Transverse colon (tissue), 4 donors: ENCODE measurements at regions of chr2 and their contacts with region 1.

Region 1: GRCh38 chr2:120735746-120736170 is at the start of gene GLI2:
- DNase-seq: peak; percentile 65
- H3K4me3 ChIP-seq: peak within 1 kb of the TSS; percentile 39 to 56 (median 45)
- H3K27ac ChIP-seq: peak within 1 kb of the TSS; percentile 85 to 90 (median 86)
- H3K4me1 ChIP-seq: peaks cover 2 to 51% (median 31%) of the 10 kb centered on the region in 4 donors
- H3K27me3 ChIP-seq: peaks cover 72% of the 10 kb centered on the region
- CTCF ChIP-seq: peak; percentile 24 to 66 (median 58)
- EP300 ChIP-seq: no peak
- POLR2A ChIP-seq: no peak
- total RNA-seq, gene GLI2: 1.1 to 15.1 (median 4.2) TPM

Region 2: GRCh38 chr2:118763797-118764196 is 1972.0 kb before region 1 on chr2:
- in situ Hi-C with region 1: no loop called
- intact Hi-C with region 1: no loop called
- DNase-seq: no peak
- H3K4me3 ChIP-seq: no peak overlapping the region
- H3K27ac ChIP-seq: no peak overlapping the region
- H3K4me1 ChIP-seq: no peaks in the 10 kb centered on the region
- H3K27me3 ChIP-seq: peaks cover 26% of the 10 kb centered on the region
- CTCF ChIP-seq: no peak
- EP300 ChIP-seq: no peak
- POLR2A ChIP-seq: no peak

Region 3: DNA sequence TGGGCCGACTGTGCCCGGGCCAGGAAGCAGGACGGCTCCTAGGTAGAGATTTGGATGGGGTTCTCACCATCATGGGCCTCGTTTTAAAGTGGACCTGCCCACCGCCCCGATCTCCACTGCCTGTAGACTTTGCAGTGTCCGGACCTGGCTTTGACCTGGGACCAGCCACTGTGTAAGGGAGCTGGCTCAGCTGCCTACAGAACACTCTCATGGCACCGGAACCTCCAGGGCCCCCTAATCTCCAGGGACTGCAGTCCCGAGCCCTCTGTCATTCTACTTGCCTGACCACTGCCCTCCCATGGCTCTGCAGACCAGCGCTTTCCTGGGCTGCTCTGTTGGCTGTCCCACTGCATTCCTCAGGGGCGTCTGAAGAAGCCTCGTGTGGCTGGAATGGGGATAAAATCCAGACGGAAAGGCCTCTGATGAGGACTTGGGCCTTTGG is 120.7 kb after region 1 on chr2:
- in situ Hi-C with region 1: no loop called
- intact Hi-C with region 1: loop called (anchors 10 kb)
- DNase-seq: no peak
- H3K4me3 ChIP-seq: no peak overlapping the region
- H3K27ac ChIP-seq: no peak overlapping the region
- H3K4me1 ChIP-seq: no peaks in the 10 kb centered on the region
- H3K27me3 ChIP-seq: no peaks in the 10 kb centered on the region
- CTCF ChIP-seq: peak; percentile 7 to 29 (median 18)
- EP300 ChIP-seq: no peak
- POLR2A ChIP-seq: no peak

Region 4: DNA sequence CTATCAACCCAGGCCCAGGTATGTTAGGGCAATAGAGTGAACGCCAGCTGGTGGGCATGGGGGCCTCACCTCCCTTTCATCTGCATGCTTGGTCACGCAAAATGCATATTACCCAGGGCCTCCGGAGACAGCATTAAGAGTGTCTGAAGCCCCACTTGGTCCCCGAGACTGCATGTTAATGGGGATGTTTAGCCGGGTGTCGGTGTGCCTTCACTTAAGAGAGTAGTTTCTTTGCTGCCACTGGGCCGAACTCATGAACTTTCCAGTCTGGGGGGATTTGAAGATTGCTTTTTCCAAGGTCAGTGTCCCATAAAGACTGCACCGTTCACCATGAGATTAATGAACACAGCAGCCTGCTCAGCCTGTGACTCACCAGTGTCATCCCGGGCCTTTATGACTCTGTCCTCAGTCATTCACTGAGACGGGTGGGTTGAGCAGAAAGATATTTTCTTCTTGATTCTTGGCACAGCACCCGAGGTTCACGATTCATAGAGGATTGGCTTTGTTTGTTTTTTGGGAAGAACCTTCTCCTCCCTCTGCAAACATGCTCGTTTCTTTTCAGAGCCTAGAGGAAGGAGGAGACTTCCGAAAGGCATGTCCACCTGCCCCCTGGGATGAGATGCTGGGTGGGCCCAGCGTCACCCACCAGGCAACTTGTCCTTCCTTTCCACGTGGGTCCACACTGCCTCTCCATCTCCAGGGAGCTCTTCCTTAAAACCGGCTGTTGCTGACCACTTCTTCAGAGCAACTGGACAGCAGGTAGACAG is 199.0 kb after region 1 on chr2:
- in situ Hi-C with region 1: no loop called
- intact Hi-C with region 1: loop called (anchors 5 kb)
- DNase-seq: peak; percentile 57
- H3K4me3 ChIP-seq: no peak overlapping the region
- H3K27ac ChIP-seq: peak overlapping the region; percentile 46 to 67 (median 61)
- H3K4me1 ChIP-seq: peaks cover 30 to 54% (median 46%) of the 10 kb centered on the region in 4 donors
- H3K27me3 ChIP-seq: peaks cover 22% of the 10 kb centered on the region
- CTCF ChIP-seq: no peak
- EP300 ChIP-seq: no peak
- POLR2A ChIP-seq: no peak